GM12878 (cell line): ENCODE measurements at regions of chr5 and their contacts with region 1.

Region 1: GRCh38 chr5:82165740-82166530 is 112.2 kb downstream of the RPS23 start:
- DNase-seq: peak; percentile 39
- ATAC-seq: peak; percentile 92
- H3K4me3 ChIP-seq: no peak overlapping the region
- H3K27ac ChIP-seq: no peak overlapping the region; the same call in 1 of the 2 replicates
- H3K4me1 ChIP-seq: peaks cover 12% of the 10 kb centered on the region; the same call in 1 of the 2 replicates
- H3K27me3 ChIP-seq: no peaks in the 10 kb centered on the region
- CTCF ChIP-seq: peak; percentile 64 to 90 (median 67)
- EP300 ChIP-seq: no peak
- POLR2A ChIP-seq: no peak
- RAD21 ChIP-seq: peak; percentile 95

Region 2: GRCh38 chr5:81301271-81302015 is 864.5 kb before region 1 on chr5 and contains the start of gene ZCCHC9:
- CTCF ChIA-PET with region 1: interaction called, 19 read pairs
- POLR2A ChIA-PET with region 1: no interaction called
- RAD21 ChIA-PET with region 1: interaction called, 6 read pairs
- SMC1A ChIA-PET with region 1: interaction called, 5 read pairs
- in situ Hi-C with region 1: no loop called
- intact Hi-C with region 1: no loop called
- DNase-seq: peak; percentile 79
- ATAC-seq: peak; percentile 92
- H3K4me3 ChIP-seq: peak within 1 kb of the TSS; percentile 76
- H3K27ac ChIP-seq: peak within 1 kb of the TSS; percentile 77
- H3K4me1 ChIP-seq: peaks cover 8% of the 10 kb centered on the region
- H3K27me3 ChIP-seq: no peaks in the 10 kb centered on the region
- CTCF ChIP-seq: peak; percentile 2 to 21 (median 12); a peak in 1 of 6 replicates
- EP300 ChIP-seq: peak; percentile 48 to 52; a peak in 2 of 4 replicates
- POLR2A ChIP-seq: peak; percentile 98
- RAD21 ChIP-seq: no peak; the same call in 1 of the 2 replicates
- polyA plus RNA-seq, gene ZCCHC9: 47.5 to 57.7 TPM

Region 3: DNA sequence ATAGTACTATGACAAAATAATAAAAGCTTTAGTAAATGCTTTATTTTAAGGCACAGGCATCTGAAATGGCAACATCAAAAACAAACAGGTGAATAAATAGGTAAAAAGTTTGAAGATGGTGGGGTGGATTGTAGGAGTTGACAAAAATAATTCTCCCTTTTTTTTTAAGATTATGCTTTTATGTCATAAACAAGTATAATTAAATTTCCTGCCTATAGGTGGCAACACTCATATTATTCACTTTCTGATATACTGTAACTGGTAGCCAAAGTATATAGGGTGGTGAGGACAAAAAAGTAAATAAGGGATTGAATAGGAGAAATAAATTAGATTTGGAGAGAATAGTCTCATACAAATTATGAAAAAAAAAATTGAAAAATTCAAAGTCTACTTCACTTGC is 652.0 kb before region 1 on chr5:
- CTCF ChIA-PET with region 1: interaction called, 94 read pairs
- POLR2A ChIA-PET with region 1: interaction called, 3 read pairs
- RAD21 ChIA-PET with region 1: interaction called, 113 read pairs
- SMC1A ChIA-PET with region 1: interaction called, 122 read pairs
- in situ Hi-C with region 1: loop called (anchors 5 kb)
- intact Hi-C with region 1: no loop called
- DNase-seq: no peak
- ATAC-seq: peak; percentile 65
- H3K4me3 ChIP-seq: no peak overlapping the region
- H3K27ac ChIP-seq: no peak overlapping the region
- H3K4me1 ChIP-seq: no peaks in the 10 kb centered on the region
- H3K27me3 ChIP-seq: no peaks in the 10 kb centered on the region
- CTCF ChIP-seq: peak in 1 of 3 experiments; percentile 8; a peak in 2 of 6 replicates
- EP300 ChIP-seq: no peak
- POLR2A ChIP-seq: no peak
- RAD21 ChIP-seq: no peak

Region 4: DNA sequence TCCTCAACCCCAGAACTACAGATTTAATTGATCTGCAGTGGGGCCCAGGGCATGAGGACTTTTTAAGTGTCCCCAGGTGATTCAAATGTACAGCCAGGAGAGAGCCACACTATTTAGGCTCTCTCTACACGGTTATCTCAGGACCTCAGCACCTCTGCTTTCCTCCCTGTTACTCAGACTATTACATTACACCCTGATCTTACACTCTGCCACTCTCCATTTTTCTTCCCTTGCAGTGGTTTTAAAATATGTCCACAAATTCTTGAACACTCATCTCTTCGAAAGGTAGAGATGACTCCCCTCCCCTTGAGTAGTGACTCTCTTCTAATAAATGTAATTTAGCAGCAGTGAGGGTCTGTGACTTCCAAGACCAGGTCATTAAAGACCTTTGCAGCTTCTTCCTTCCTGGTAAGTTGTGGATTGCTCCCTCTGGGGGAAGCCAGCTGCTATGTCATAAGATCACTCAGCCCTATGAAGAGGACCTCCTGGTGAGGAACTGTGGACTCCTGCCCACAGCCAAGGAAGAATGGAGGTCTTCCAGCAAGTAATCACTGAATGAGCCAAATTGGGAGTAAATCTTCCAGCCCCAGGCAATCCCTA is 327.5 kb before region 1 on chr5:
- CTCF ChIA-PET with region 1: interaction called, 18 read pairs
- POLR2A ChIA-PET with region 1: interaction called, 4 read pairs
- RAD21 ChIA-PET with region 1: interaction called, 7 read pairs
- SMC1A ChIA-PET with region 1: interaction called, 16 read pairs
- in situ Hi-C with region 1: no loop called
- intact Hi-C with region 1: no loop called
- DNase-seq: no peak
- ATAC-seq: peak; percentile 92
- H3K4me3 ChIP-seq: no peak overlapping the region
- H3K27ac ChIP-seq: no peak overlapping the region
- H3K4me1 ChIP-seq: no peaks in the 10 kb centered on the region
- H3K27me3 ChIP-seq: no peaks in the 10 kb centered on the region
- CTCF ChIP-seq: peak; percentile 51 to 61 (median 54)
- EP300 ChIP-seq: no peak
- POLR2A ChIP-seq: no peak
- RAD21 ChIP-seq: peak; percentile 74

Region 5: GRCh38 chr5:81971712-81972495 is 194.0 kb before region 1 on chr5 and contains the start of gene ATG10:
- CTCF ChIA-PET with region 1: interaction called, 12 read pairs
- POLR2A ChIA-PET with region 1: interaction called, 3 read pairs
- RAD21 ChIA-PET with region 1: interaction called, 5 read pairs
- SMC1A ChIA-PET with region 1: interaction called, 9 read pairs
- in situ Hi-C with region 1: no loop called
- intact Hi-C with region 1: loop called (anchors 2 kb)
- DNase-seq: peak; percentile 69
- ATAC-seq: peak; percentile 97
- H3K4me3 ChIP-seq: peak within 1 kb of the TSS; percentile 79
- H3K27ac ChIP-seq: peak within 1 kb of the TSS; percentile 90
- H3K4me1 ChIP-seq: no peaks in the 10 kb centered on the region
- H3K27me3 ChIP-seq: no peaks in the 10 kb centered on the region
- CTCF ChIP-seq: no peak
- EP300 ChIP-seq: no peak
- POLR2A ChIP-seq: peak; percentile 98
- RAD21 ChIP-seq: no peak
- polyA plus RNA-seq, gene ATG10: 7.5 to 9.0 TPM

Region 6: GRCh38 chr5:82142928-82143577 is 22.9 kb before region 1 on chr5:
- CTCF ChIA-PET with region 1: interaction called, 4 read pairs
- POLR2A ChIA-PET with region 1: no interaction called
- RAD21 ChIA-PET with region 1: interaction called, 4 read pairs
- SMC1A ChIA-PET with region 1: interaction called, 11 read pairs
- in situ Hi-C with region 1: no loop called
- intact Hi-C with region 1: no loop called
- DNase-seq: no peak
- ATAC-seq: peak; percentile 16; the same call in 2 of the 3 replicates
- H3K4me3 ChIP-seq: no peak overlapping the region
- H3K27ac ChIP-seq: no peak overlapping the region
- H3K4me1 ChIP-seq: no peaks in the 10 kb centered on the region
- H3K27me3 ChIP-seq: no peaks in the 10 kb centered on the region
- CTCF ChIP-seq: no peak
- EP300 ChIP-seq: no peak
- POLR2A ChIP-seq: no peak
- RAD21 ChIP-seq: no peak

Region 7: DNA sequence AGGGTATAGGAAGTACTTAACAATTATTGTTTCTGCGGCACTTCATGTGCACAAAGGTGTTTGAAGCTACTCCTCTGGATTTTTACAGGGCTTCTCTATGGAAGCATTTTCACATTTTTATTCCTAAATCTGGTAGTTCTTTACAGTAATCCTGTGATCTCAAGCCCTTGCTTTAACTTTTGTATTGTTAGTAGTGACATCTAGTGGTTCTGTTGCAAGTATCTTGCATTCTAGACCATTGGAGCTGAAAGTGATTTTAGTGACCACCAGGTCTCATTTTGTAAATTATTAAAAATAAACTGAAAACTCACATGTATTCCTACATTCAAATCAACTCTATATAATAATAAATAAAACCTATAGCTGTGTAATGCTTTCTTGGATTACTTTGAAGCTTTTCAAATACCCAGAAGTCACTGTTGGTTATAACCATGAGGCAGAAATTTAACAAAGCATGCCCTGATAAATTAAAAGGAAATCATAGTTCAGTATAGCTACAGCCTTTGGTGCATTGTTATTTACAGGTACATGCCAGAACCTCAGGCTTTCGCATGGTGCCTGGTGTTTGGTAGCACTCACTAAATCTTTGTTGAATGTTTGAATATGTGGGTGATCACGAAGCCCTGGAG is 93.4 kb after region 1 on chr5:
- CTCF ChIA-PET with region 1: interaction called, 20 read pairs
- POLR2A ChIA-PET with region 1: no interaction called
- RAD21 ChIA-PET with region 1: interaction called, 4 read pairs
- SMC1A ChIA-PET with region 1: interaction called, 7 read pairs
- in situ Hi-C with region 1: no loop called
- intact Hi-C with region 1: no loop called
- DNase-seq: no peak
- ATAC-seq: peak; percentile 83
- H3K4me3 ChIP-seq: no peak overlapping the region
- H3K27ac ChIP-seq: no peak overlapping the region
- H3K4me1 ChIP-seq: no peaks in the 10 kb centered on the region
- H3K27me3 ChIP-seq: no peaks in the 10 kb centered on the region
- CTCF ChIP-seq: peak; percentile 40 to 45 (median 40); a peak in 4 of 6 replicates
- EP300 ChIP-seq: no peak
- POLR2A ChIP-seq: no peak
- RAD21 ChIP-seq: peak; percentile 46